Dendritic cell treated with granulocyte-macrophage colony-stimulating factor and Interleukin-4, amounts not matched to agents 40 ng/mL and 50 ng/mL, for 4 days (primary cell): ENCODE measurements at regions of chr13 and their contacts with region 1.

Region 1: DNA sequence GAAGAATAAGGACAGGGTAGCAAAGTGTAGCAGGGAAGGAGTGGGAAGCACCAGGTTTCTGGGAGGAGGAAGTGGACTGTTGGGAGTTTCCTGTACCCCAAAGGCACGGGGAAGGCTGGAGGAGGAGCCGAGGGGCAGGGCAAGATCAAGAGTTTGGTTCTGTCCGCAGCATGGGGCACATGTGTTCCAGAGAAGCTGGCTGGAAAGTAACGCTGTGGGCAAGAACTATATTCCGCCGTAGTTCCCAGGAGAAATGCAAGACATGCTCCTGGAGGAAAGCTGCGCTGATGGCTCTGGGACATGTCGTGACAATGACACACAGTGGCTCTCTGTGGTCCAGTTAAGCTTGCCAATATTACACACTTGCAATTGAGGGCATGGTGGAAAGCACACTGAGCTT is 51.7 kb upstream of the KPNA3 start:
- H3K4me3 Mint-ChIP-seq: no peak overlapping the region
- H3K27ac Mint-ChIP-seq: no peak overlapping the region
- H3K4me1 Mint-ChIP-seq: peaks cover 36% of the 10 kb centered on the region
- H3K27me3 Mint-ChIP-seq: peaks cover 3% of the 10 kb centered on the region

Region 2: DNA sequence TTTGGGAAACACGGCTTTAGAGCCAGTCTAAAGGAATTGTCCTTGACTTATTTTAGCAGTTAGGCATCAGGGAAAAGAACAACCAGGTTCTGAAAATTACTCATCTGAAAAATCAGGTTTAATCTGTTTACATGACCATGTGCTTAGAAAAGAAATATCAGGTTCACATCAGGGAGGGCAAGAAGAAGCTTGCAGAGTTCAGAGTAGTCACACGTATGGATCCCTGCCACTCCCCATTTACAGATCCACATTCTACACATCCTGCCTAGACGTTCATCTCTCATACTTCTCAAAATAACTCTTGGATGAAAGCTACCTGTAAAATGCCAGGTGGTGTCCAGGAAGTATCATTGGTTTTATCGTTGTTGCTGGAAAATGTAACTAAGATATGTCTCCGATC is 362.4 kb before region 1 on chr13:
- intact Hi-C with region 1: no loop called
- H3K4me3 Mint-ChIP-seq: no peak overlapping the region
- H3K27ac Mint-ChIP-seq: no peak overlapping the region
- H3K4me1 Mint-ChIP-seq: no peaks in the 10 kb centered on the region
- H3K27me3 Mint-ChIP-seq: no peaks in the 10 kb centered on the region

Region 3: DNA sequence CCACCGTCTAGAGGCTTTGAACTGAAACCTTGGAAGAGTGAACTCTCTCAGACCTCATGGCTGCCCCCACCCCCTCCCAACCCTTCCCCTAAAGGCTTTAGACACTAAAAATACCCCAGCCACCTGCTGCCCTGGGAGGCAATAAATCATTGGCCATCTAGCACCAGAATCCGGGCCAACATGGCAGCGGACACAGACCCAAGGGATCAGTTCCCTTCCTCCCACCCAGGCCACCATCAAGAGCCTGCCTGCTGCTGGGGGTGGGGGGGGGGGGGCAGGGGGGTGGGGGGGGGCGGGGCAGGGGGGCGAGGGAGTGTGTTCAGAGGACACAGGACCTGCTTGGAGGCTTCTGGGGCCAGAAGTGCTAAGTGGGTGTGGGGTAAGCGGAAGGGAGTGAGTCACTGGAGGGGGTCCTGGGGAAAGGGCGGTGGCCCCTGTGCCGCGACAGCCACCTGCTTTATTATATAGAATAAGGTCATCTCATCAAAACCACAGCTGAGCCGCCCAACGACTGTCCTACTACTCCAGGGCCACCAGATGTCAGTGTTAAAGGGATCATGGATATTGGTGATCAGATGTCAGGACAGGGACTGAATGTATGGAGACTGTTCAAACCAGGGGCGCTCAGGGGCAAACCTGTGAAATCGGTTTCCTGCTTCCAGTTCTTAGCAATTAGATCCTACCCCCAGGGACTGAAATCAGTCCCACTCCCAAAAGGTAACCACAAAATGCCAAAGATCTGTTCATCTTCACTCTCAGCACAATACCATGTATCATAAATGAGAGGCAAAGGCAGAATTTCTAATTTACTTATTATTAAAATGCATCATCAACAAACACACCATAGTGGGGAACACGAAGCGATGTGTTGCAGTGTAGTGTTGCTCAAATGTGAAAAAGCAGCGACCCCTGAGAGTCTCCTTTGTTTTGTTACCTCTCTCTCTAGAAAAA is 191.6 kb before region 1 on chr13:
- intact Hi-C with region 1: loop called (anchors 1 kb)
- H3K4me3 Mint-ChIP-seq: no peak overlapping the region
- H3K27ac Mint-ChIP-seq: no peak overlapping the region
- H3K4me1 Mint-ChIP-seq: peaks cover 5% of the 10 kb centered on the region
- H3K27me3 Mint-ChIP-seq: no peaks in the 10 kb centered on the region

Region 4: GRCh38 chr13:49669735-49670309 is 174.4 kb before region 1 on chr13:
- intact Hi-C with region 1: loop called (anchors 1 kb)
- H3K4me3 Mint-ChIP-seq: no peak overlapping the region
- H3K27ac Mint-ChIP-seq: no peak overlapping the region
- H3K4me1 Mint-ChIP-seq: peaks cover 14% of the 10 kb centered on the region
- H3K27me3 Mint-ChIP-seq: no peaks in the 10 kb centered on the region

Region 5: DNA sequence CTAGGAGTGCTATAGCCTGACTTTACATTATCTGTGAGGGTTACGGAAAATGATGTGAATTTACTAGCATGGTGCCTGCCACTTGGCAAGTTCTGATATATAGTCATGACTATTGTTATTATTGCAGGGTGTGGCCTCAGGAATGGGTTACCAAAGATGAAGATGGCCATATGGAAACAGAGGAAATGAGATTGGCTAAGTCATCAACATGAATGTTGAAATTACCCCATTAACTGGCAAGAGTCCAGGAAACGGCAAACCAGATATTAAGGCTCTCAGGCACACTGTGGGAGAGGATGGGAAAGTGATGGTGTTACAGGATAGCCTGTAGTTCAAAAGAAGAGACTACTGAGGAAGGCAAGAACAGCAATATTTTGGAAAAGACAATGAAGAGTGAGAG is 354.3 kb after region 1 on chr13:
- intact Hi-C with region 1: no loop called
- H3K4me3 Mint-ChIP-seq: no peak overlapping the region
- H3K27ac Mint-ChIP-seq: peak overlapping the region; percentile 9
- H3K4me1 Mint-ChIP-seq: peaks cover 43% of the 10 kb centered on the region
- H3K27me3 Mint-ChIP-seq: peaks cover 6% of the 10 kb centered on the region